ENCODE measurements at regions of chr19 and their contacts with region 1.

Region 1: DNA sequence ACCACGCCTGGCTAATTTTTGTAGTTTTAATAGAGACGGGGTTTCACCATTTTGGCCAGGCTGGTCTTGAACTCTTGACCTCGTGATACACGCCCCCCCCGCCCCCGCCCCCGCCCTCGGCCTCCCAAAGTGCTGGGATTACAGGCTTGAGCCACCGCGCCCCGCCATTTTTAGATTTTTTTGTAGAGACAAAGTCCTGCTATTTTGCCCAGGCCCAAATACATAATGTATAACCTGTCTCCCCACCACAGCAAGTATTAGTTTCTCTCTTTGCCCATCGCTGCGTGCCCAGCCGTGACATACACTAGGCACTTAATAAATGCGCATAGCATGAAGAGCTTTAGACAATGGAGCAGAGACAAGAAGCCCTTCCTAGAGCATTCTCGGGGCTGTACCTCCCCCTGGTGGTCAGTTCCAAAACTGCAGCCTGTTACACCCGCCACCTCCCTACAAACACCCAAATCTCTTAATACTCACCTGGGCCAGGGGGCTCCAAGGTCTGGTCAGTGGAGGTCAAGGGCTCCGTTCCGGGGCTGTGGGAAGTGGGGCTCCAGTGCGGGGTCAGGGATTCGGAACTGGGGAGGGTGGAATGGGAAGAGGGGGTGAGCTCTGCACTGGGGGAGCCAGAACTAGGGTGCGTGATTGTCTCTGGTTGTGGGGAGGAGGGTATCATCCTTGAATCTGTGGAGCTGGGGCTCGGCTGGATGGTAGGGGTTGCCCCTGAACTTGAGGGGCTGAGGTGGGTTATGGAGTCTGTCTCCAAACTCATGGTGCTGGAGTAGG is 22.5 kb downstream of the IQCN start:
- DNase-seq: peak; percentile 67 to 90 (median 83)
- ATAC-seq: peak; percentile 95
- H3K4me3 ChIP-seq: no peak overlapping the region
- H3K4me3 Mint-ChIP-seq: no peak overlapping the region
- H3K27ac ChIP-seq: no peak overlapping the region
- H3K27ac Mint-ChIP-seq: no peak overlapping the region
- H3K4me1 ChIP-seq: no peaks in the 10 kb centered on the region
- H3K4me1 Mint-ChIP-seq: peaks cover 1% of the 10 kb centered on the region
- H3K27me3 ChIP-seq: peaks cover 0 to 11% of the 10 kb centered on the region in 2 experiments
- H3K27me3 Mint-ChIP-seq: peaks cover 24% of the 10 kb centered on the region
- CTCF ChIP-seq: peak; percentile 83

Region 2: DNA sequence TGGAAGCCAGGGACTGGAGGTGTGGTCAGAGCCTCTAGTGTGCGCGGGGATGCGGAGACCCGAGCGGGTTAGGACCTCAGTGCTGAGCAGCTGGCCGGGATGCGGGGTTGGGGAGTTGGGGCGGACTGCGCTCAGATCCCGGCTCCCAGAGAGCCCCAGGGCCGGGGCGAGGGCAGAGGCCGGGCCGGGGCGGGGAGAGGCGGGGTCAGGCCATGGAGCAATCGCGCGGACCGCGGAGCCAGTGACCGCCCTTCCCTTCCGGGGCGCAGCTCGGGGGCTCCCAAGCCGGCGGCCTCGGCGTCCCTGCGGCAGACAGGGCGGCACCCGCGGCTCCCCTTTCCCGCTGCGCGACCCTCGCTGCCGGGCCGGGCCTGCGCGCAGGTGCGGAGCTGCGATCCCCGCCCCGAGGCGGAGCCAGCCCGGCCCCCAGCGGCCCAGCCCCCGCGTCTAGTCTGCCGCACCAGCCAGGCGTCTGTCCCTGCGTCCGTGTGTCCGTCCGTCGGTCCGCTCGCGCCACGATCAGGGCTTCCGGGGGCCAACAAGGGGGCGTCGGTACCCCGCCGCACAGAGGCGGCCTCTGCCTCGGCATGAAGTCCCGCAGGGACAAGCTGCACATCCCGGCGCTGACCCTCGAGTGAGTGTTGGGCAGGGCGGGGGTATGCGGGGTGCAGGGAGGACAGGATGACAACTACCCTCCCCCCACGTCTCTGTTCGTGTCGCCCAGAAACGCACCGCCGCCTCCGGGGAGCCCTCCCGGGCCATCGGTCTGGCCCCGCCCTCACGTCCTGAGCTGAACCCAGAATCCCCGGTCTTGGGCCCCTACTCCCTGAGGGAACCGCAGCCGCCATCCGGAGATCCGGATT is 141.8 kb before region 1 on chr19:
- CTCF ChIA-PET with region 1: interaction called, 26 read pairs
- POLR2A ChIA-PET with region 1: no interaction called
- intact Hi-C with region 1: loop called in 1 of 2 experiments (anchors 1 kb)
- DNase-seq: peak in 6 of 9 experiments; percentile 48 to 72 (median 58)
- ATAC-seq: peak; percentile 79
- H3K4me3 ChIP-seq: peak overlapping the region; percentile 74
- H3K4me3 Mint-ChIP-seq: peak overlapping the region; percentile 82
- H3K27ac ChIP-seq: peak overlapping the region; percentile 41 to 53
- H3K27ac Mint-ChIP-seq: peak overlapping the region; percentile 86
- H3K4me1 ChIP-seq: peaks cover 21% of the 10 kb centered on the region
- H3K4me1 Mint-ChIP-seq: peaks cover 18% of the 10 kb centered on the region
- H3K27me3 ChIP-seq: no peaks in the 10 kb centered on the region
- H3K27me3 Mint-ChIP-seq: no peaks in the 10 kb centered on the region
- CTCF ChIP-seq: no peak

Region 3: DNA sequence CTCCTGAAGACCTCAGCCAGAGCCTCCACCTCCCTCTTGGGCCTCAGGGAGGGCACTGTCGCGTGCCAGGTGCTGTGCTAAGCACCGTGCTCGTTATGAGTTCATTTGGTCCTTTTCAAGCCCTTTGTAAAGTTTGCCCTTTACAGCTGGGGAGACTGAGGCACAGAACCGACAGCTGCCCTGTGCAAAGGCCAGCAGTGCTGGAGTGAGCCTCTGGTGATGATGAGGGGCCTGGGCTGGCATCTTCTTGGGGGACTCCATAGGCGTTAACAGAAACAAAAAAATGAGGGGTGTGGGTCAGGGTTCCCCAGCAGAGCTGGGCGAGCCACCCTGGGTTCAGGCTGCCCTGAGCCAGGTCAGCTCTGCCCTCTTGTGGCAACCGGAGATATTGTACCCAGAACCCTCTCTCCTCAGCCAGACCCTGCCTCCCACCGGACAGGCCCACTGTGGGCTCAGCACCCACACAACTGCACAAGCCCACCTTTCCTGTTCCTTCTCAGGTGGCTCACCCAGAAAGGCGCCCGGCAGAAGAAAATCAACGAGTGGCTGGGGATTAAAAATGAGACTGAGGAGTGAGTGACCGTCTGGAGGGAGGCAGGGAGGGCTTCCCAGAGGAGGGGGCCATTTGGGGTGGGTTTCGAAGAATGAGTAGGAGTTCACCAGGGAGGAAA is 83.7 kb before region 1 on chr19:
- CTCF ChIA-PET with region 1: interaction called, 14 read pairs
- POLR2A ChIA-PET with region 1: no interaction called
- intact Hi-C with region 1: no loop called
- DNase-seq: peak in 8 of 9 experiments; percentile 44 to 77 (median 64)
- ATAC-seq: peak; percentile 98
- H3K4me3 ChIP-seq: no peak overlapping the region
- H3K4me3 Mint-ChIP-seq: no peak overlapping the region
- H3K27ac ChIP-seq: no peak overlapping the region
- H3K27ac Mint-ChIP-seq: no peak overlapping the region
- H3K4me1 ChIP-seq: peaks cover 6% of the 10 kb centered on the region
- H3K4me1 Mint-ChIP-seq: peaks cover 2% of the 10 kb centered on the region
- H3K27me3 ChIP-seq: no peaks in the 10 kb centered on the region
- H3K27me3 Mint-ChIP-seq: no peaks in the 10 kb centered on the region
- CTCF ChIP-seq: peak; percentile 69

Region 4: GRCh38 chr19:18203863-18204393 is 47.9 kb before region 1 on chr19 and contains the start of gene RAB3A:
- CTCF ChIA-PET with region 1: interaction called, 194 read pairs
- POLR2A ChIA-PET with region 1: interaction called, 5 read pairs
- intact Hi-C with region 1: loop called (anchors 1 kb)
- DNase-seq: peak; percentile 98 to 100 (median 100)
- ATAC-seq: peak; percentile 90
- H3K4me3 ChIP-seq: peak within 1 kb of the TSS; percentile 60 to 91
- H3K4me3 Mint-ChIP-seq: peak within 1 kb of the TSS; percentile 96
- H3K27ac ChIP-seq: peak within 1 kb of the TSS; percentile 76 to 81
- H3K27ac Mint-ChIP-seq: peak within 1 kb of the TSS; percentile 96
- H3K4me1 ChIP-seq: peaks cover 17% of the 10 kb centered on the region
- H3K4me1 Mint-ChIP-seq: peaks cover 21% of the 10 kb centered on the region
- H3K27me3 ChIP-seq: no peaks in the 10 kb centered on the region
- H3K27me3 Mint-ChIP-seq: peaks cover 5% of the 10 kb centered on the region
- CTCF ChIP-seq: no peak
- total RNA-seq, gene RAB3A: 16.8 to 19.4 TPM

Region 5: DNA sequence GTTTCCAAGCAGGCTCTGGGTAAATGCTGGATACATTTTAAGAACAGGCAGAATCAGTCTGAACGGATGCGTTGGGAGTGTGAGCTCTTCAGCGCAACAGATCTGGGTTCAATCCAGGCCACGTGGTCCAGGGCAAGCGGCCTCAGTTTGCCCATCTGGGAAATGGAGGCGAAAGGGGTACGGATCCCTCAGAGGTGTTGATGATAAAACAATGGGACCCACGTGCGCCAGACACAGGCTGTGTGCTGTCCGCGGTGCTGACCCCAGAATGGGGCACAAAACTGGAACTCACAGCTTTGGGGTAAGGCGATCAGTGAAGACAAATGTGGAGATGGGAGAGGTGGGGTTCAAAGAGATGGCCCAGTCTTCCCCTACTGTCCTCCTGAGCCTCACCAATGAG is 12.5 kb before region 1 on chr19:
- CTCF ChIA-PET with region 1: interaction called, 17 read pairs
- POLR2A ChIA-PET with region 1: no interaction called
- intact Hi-C with region 1: no loop called
- DNase-seq: no peak
- ATAC-seq: no peak
- H3K4me3 ChIP-seq: no peak overlapping the region
- H3K4me3 Mint-ChIP-seq: no peak overlapping the region
- H3K27ac ChIP-seq: no peak overlapping the region
- H3K27ac Mint-ChIP-seq: no peak overlapping the region
- H3K4me1 ChIP-seq: no peaks in the 10 kb centered on the region
- H3K4me1 Mint-ChIP-seq: no peaks in the 10 kb centered on the region
- H3K27me3 ChIP-seq: peaks cover 0 to 2% of the 10 kb centered on the region in 2 experiments
- H3K27me3 Mint-ChIP-seq: peaks cover 24% of the 10 kb centered on the region
- CTCF ChIP-seq: no peak

Region 6: DNA sequence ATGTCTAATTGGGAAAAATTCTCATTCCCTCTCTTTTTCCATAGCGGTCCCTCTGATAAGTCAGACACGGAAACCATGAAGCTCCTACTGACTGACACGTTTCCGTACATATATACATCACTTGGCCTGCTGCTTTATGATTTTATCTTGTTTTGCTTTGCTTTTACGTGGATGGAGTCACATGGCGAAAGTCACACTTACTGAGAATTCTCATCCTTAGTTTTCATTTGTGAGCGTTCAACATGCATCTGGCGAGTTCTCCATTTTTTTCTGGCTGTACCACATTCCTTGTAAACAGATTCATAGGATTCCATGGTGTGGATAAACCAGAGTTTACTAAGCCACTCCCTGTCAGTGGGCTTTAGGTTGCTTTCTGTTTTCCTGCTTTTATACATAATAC is 109.9 kb after region 1 on chr19:
- CTCF ChIA-PET with region 1: interaction called, 11 read pairs
- POLR2A ChIA-PET with region 1: no interaction called
- intact Hi-C with region 1: no loop called
- DNase-seq: no peak
- ATAC-seq: no peak
- H3K4me3 ChIP-seq: no peak overlapping the region
- H3K4me3 Mint-ChIP-seq: no peak overlapping the region
- H3K27ac ChIP-seq: no peak overlapping the region
- H3K27ac Mint-ChIP-seq: no peak overlapping the region
- H3K4me1 ChIP-seq: no peaks in the 10 kb centered on the region
- H3K4me1 Mint-ChIP-seq: no peaks in the 10 kb centered on the region
- H3K27me3 ChIP-seq: no peaks in the 10 kb centered on the region
- H3K27me3 Mint-ChIP-seq: no peaks in the 10 kb centered on the region
- CTCF ChIP-seq: no peak

Region 7: DNA sequence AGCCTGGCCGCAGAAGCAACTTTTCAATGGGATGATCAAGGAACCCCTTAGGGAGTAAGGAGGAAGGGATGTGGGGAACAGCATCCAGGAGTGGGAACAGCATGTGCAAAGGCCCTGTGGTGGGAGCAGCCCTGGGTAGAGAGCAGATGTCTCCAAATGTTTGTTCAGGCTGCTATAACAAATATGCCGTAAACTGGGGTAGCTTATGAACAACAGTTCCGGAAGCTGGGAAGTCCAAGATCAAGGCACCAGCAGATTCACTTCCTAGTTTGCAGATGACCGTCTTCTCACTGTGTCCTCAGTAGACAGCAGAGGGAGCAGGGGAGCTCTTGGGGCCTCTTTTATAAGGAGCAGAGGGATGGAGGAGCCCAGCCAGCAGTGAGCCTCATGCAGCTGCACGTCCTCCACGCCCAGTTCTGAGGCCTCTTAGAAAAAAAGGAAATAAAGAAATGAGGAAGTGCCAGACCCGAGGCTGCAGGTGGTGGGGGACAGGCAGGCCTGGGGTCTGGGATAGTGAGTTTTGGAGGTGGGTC is 149.9 kb after region 1 on chr19:
- CTCF ChIA-PET with region 1: no interaction called
- POLR2A ChIA-PET with region 1: no interaction called
- intact Hi-C with region 1: no loop called
- DNase-seq: peak in 1 of 9 experiments; percentile 38
- ATAC-seq: no peak
- H3K4me3 ChIP-seq: no peak overlapping the region
- H3K4me3 Mint-ChIP-seq: no peak overlapping the region
- H3K27ac ChIP-seq: no peak overlapping the region
- H3K27ac Mint-ChIP-seq: no peak overlapping the region
- H3K4me1 ChIP-seq: peaks cover 8% of the 10 kb centered on the region
- H3K4me1 Mint-ChIP-seq: peaks cover 3% of the 10 kb centered on the region
- H3K27me3 ChIP-seq: peaks cover 7 to 8% of the 10 kb centered on the region in 2 experiments
- H3K27me3 Mint-ChIP-seq: peaks cover 10% of the 10 kb centered on the region
- CTCF ChIP-seq: no peak

Region 8: DNA sequence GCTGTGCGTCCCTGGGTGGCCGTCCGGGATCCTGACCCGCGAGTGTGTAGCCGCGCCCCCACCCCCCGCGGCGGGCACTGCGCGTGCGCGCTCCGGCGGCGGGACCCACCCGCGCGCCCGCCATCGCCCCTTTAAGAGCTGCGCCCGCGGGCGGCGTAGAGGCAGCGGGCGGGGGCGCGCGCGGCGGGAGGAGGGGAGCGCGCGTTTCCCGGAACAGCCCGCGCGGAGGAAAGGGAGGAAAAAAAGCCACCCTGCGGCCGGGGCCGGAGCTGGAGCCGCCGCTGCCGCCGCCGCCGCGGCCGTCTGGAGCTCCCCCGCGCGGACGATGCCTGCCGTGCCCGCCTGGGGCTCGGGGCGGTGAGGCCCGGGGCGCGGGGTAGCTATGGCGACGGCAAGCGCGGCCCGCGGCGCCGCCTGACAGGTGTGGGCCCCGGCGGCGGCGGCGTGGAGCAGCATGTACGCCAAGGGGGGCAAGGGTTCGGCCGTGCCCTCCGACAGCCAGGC is 167.5 kb after region 1 on chr19 and contains the start of gene SSBP4:
- CTCF ChIA-PET with region 1: interaction called, 3 read pairs
- POLR2A ChIA-PET with region 1: no interaction called
- intact Hi-C with region 1: loop called in 1 of 2 experiments (anchors 5 kb)
- DNase-seq: peak; percentile 43 to 87 (median 61)
- ATAC-seq: peak; percentile 50
- H3K4me3 ChIP-seq: peak within 1 kb of the TSS; percentile 55 to 74
- H3K4me3 Mint-ChIP-seq: peak within 1 kb of the TSS; percentile 84
- H3K27ac ChIP-seq: peak within 1 kb of the TSS in 1 of 2 experiments; percentile 74
- H3K27ac Mint-ChIP-seq: peak within 1 kb of the TSS; percentile 91
- H3K4me1 ChIP-seq: peaks cover 87% of the 10 kb centered on the region
- H3K4me1 Mint-ChIP-seq: peaks cover 77% of the 10 kb centered on the region
- H3K27me3 ChIP-seq: peaks cover 0 to 7% of the 10 kb centered on the region in 2 experiments
- H3K27me3 Mint-ChIP-seq: peaks cover 14% of the 10 kb centered on the region
- CTCF ChIP-seq: no peak
- total RNA-seq, gene SSBP4: 49.9 to 58.2 TPM

Measured in CD8-positive, alpha-beta T cell (primary cell).